ENCODE measurements at regions of chr1 and their contacts with region 1.

Region 1: DNA sequence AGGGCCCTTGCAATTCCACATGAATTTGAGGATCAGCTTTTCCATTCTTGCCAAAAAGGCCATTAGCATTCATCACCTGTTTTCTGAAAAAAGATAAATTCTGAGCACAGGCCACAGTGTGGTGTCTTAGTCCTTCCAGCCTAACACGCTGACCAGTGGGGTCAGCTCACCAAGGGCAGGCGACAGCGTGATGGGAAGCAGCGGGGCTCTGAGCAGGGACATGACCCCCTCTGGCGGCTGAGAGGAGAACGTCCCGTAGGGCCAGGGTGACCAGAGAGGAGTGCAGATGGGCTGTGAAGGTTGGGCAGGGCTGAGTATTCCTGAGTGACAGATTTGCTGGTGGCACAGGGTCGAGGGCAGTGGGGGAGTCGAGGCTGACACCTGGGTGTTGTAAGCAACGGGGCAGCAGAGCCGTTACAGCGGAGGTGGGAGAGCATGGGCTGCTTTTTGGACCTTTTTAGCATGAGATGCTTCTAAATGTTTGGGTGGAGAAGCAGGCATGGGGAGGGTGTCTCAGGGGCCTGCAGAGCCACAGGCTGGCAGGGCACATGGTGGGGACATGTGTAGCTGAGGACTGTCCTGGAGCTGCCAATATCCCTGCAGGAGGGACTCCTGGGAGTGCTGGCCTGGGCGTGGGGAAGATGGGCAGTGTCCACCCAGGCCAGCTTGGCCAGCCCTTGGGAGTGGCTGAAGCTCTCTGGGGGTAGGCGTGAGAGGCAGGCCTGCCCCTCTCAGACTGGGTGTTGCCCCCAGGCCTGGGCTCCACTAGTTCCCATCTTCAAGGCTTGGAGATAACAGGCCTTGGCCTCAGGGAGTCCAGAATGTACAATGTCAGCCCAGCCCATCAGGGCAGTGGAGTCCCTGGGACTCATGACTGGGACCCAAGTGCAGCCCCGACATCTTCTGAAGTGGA is 8.6 kb upstream of the CALML6 start:
- DNase-seq: peak; percentile 38
- H3K4me3 ChIP-seq: no peak overlapping the region
- H3K27ac ChIP-seq: no peak overlapping the region
- H3K27me3 ChIP-seq: no peaks in the 10 kb centered on the region
- CTCF ChIP-seq: peak; percentile 96

Region 2: GRCh38 chr1:1777583-1777899 is 128.9 kb before region 1 on chr1:
- CTCF ChIA-PET with region 1: interaction called, 10 read pairs
- POLR2A ChIA-PET with region 1: no interaction called
- DNase-seq: no peak
- H3K4me3 ChIP-seq: peak overlapping the region; percentile 80
- H3K27ac ChIP-seq: no peak overlapping the region
- H3K27me3 ChIP-seq: no peaks in the 10 kb centered on the region
- CTCF ChIP-seq: no peak

Region 3: DNA sequence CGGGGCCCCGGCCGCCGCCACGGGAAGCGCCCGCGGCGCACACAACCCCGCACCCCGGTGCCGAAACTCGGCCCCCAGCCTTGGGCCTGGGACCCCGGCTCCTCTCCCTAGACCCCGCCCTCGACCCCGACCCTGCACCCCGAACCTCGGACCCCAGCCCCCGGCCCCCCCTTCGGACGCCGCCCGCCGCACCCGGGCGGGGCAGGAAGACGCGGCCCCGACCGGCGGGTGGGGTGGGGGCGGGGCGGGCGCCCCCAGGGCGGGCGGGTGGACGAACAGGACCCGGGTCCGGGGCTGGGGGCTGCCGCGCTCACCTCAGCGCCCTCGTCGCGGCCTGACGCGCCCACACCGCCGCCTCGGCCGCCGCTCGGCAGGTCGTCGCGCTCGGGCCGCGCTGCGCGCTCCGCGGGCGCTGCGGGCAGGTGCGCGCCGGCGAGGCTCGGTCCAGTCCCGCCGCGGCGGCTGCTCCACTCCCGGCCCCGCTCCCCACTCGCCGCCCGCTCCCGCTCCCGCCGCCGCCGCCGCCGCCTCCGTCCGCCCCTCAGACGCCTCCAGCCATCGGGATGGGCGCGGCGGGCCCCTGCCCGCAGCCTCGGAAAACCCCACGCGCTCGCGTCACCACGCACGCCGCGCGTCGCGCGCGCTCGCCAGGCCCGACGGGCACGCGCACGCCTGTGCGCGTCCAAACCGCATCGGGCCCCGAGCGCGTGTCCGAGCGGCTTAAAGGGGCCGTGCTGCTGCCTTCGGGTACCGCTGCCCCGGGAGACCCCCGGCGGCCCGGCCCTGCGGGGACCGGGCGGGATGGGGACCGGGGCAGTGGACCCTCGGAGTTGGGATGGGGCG is 15.7 kb before region 1 on chr1 and contains the start of gene GNB1:
- CTCF ChIA-PET with region 1: interaction called, 15 read pairs
- POLR2A ChIA-PET with region 1: interaction called, 4 read pairs
- DNase-seq: peak; percentile 56
- H3K4me3 ChIP-seq: peak within 1 kb of the TSS; percentile 78
- H3K27ac ChIP-seq: peak within 1 kb of the TSS; percentile 68
- H3K27me3 ChIP-seq: no peaks in the 10 kb centered on the region
- CTCF ChIP-seq: no peak
- polyA plus RNA-seq, gene GNB1: 400 and 437 TPM in 2 replicates

Region 4: DNA sequence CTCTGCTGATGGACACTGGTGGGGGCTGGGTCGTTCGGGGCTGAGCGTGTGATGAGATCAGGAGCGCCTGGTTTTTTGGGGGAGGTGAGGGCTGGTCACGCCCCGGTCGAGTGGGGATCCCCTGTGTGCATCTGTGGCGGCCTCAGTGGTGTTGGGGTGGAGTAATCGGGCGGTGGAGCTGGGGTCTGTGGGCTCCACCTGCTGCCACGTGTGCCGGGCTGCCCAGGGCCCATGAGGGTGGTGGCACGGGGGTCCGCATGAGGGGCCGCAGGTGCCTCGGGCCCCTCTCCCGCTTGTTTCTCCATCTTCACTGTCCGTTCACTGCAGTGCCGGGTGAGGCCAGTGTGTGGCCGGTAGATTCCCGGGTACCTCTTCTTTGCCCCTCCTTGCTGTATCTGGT is 161.0 kb after region 1 on chr1:
- CTCF ChIA-PET with region 1: no interaction called
- POLR2A ChIA-PET with region 1: no interaction called
- DNase-seq: no peak
- H3K4me3 ChIP-seq: no peak overlapping the region
- H3K27ac ChIP-seq: no peak overlapping the region
- H3K27me3 ChIP-seq: peaks cover 8% of the 10 kb centered on the region
- CTCF ChIP-seq: no peak

Region 5: GRCh38 chr1:2115681-2116341 is 209.4 kb after region 1 on chr1:
- CTCF ChIA-PET with region 1: no interaction called
- POLR2A ChIA-PET with region 1: no interaction called
- DNase-seq: no peak
- H3K4me3 ChIP-seq: no peak overlapping the region
- H3K27ac ChIP-seq: no peak overlapping the region
- H3K27me3 ChIP-seq: peaks cover 26% of the 10 kb centered on the region
- CTCF ChIP-seq: no peak